GM23248 (cell line): ENCODE measurements at regions of chr3 and their contacts with region 1.

Region 1: DNA sequence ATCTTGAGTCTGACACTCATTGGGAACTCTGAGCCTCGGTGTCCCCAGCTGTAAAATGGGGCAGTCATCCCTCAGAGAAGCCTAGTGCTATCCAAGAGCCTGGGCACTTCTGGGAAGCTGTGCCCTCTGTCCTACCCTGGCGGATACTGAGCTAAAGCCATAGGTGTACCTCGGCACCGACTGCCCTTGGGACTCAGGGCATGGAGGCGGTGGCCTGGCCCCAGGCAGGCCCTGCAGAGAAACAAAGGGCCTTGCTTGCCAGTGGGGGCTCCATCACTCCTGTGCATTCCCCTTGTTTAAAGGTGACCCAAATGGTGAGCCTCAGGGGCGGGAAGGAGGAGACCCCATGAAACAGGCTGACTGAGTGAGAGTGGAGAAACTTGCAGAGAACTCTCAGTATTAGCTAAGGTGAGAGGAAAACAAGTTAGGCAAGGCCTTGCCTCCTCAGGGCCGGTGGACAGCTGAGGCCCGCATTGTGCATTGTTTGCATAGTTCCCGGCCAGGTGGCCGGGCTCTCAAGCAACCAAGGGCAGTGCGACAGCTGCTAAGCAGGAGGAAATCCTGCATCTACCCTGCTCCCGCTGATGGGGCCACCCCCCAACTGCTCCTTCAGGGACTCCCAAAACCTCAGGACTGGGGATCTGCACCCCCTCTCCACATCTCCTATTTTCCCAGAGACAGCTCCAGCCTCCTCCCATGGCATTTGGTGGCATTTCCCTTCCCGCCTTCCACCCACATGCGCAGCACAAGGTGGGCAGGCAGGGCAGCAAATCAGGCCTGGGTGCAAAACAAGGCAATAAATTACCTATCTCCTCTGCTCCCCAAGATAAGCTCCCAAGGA is 4.3 kb downstream of the PFKFB4 start:
- DNase-seq: no peak
- H3K4me3 ChIP-seq: no peak overlapping the region
- H3K27ac ChIP-seq: no peak overlapping the region
- H3K4me1 ChIP-seq: no peaks in the 10 kb centered on the region
- H3K27me3 ChIP-seq: no peaks in the 10 kb centered on the region

Region 2: GRCh38 chr3:46998121-46998851 is 1554.0 kb before region 1 on chr3:
- in situ Hi-C with region 1: no loop called
- DNase-seq: peak; percentile 53
- H3K4me3 ChIP-seq: no peak overlapping the region
- H3K27ac ChIP-seq: no peak overlapping the region
- H3K4me1 ChIP-seq: peaks cover 4% of the 10 kb centered on the region; the same call in 1 of the 2 replicates
- H3K27me3 ChIP-seq: no peaks in the 10 kb centered on the region

Region 3: DNA sequence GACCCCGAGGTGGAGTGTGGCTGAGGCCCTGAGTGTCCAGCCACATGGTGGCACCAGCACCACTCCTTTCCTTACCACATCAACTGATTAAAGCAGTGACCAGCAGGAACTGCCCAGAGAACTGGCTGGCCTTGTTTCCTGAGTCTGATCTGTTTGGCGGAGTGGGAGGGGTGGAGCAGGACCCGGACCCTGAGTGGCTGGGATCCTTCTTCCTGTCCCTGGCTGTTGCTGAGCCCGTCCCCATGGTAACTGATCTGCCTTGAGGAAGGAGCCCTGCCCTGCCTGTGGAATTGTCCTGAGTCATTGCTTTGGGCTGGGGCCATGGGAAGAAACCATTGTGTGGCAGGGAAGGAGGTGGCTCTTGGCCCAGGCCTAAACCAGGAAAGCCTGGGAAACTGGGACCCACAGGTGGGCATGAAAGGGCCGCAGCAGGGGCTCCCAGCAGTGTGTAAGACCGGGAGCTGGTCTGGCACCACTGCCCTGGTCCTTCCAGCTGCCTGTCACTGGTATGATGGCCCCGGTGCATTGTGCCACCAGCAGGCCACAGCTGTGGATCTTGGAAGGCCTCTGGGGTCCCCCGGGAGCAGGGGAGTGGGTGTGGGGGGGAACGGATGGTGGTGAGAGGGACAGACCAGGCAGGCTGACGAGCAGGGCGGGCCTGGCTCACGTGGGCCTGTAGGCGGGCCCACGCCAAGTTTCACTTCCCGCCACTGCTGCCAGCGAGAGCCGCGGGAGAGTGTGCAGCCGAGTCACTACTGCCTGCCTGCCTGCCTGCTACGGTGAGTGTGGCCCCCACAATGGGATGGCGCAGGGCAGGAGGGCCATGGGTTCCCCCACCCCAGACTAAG is 86.6 kb before region 1 on chr3:
- in situ Hi-C with region 1: loop called (anchors 5 kb)
- DNase-seq: peak; percentile 100
- H3K4me3 ChIP-seq: peak overlapping the region; percentile 73
- H3K27ac ChIP-seq: peak overlapping the region; percentile 99
- H3K4me1 ChIP-seq: peaks cover 24% of the 10 kb centered on the region
- H3K27me3 ChIP-seq: no peaks in the 10 kb centered on the region